Activated B cell treated with CpG ODN at 0.5 μM for 24 hours (primary cell): ENCODE measurements at regions of chr5 and their contacts with region 1.

Region 1: GRCh38 chr5:119411935-119412602 is 40.2 kb upstream of the HSD17B4 start:
- DNase-seq: no peak
- ATAC-seq: peak; percentile 74
- H3K4me3 Mint-ChIP-seq: peak overlapping the region; percentile 90
- H3K27ac Mint-ChIP-seq: peak overlapping the region; percentile 89
- H3K4me1 Mint-ChIP-seq: peaks cover 81% of the 10 kb centered on the region
- H3K27me3 Mint-ChIP-seq: no peaks in the 10 kb centered on the region
- CTCF ChIP-seq: peak; percentile 98

Region 2: DNA sequence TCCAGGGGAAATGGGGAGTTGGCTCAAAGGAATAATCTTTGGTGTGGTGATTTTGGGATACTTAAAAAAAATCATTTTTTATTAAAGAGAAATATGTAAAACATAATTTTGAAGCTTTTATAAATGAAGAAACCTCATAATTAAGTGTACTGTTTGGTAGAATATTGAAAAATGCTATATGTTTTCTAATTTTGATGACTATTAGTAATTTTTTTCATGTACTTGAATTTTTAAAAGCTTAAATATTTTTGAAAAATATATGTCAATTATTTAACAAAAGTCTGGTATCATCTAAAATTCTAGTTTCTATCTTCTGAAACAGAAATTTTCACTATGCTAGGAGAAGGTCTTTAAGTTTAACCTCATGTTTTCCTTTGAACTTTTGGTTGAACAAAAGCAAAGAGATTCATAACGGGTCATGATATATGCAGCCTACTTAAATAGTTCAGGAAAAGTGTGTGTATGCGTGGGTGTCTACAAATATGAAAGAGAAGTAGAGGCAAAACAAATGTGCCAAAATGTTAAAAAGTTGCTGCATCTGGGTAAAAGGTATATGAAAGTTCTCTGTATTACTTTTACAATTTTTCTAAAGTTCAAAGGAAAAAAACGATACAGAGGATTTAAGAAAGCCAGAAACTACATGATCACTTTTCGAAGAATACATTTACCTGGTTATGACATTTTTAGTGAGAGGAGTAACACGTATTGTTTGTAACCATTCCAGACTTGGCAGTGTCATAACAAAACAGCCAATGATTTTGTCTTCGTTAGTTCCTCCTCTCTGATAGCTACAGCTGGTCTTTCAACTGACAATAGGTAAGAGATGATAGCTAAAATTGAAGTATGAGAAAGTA is 173.6 kb before region 1 on chr5:
- CTCF ChIA-PET with region 1: interaction called, 3 read pairs
- POLR2A ChIA-PET with region 1: interaction called, 12 read pairs
- intact Hi-C with region 1: no loop called
- DNase-seq: no peak
- ATAC-seq: no peak
- H3K4me3 Mint-ChIP-seq: no peak overlapping the region
- H3K27ac Mint-ChIP-seq: no peak overlapping the region
- H3K4me1 Mint-ChIP-seq: no peaks in the 10 kb centered on the region
- H3K27me3 Mint-ChIP-seq: no peaks in the 10 kb centered on the region
- CTCF ChIP-seq: no peak

Region 3: GRCh38 chr5:119315516-119315949 is 96.5 kb before region 1 on chr5:
- CTCF ChIA-PET with region 1: interaction called, 98 read pairs
- POLR2A ChIA-PET with region 1: interaction called, 9 read pairs
- intact Hi-C with region 1: loop called (anchors 1 kb)
- DNase-seq: no peak
- ATAC-seq: peak; percentile 78
- H3K4me3 Mint-ChIP-seq: peak overlapping the region; percentile 55
- H3K27ac Mint-ChIP-seq: peak overlapping the region; percentile 82
- H3K4me1 Mint-ChIP-seq: peaks cover 92% of the 10 kb centered on the region
- H3K27me3 Mint-ChIP-seq: no peaks in the 10 kb centered on the region
- CTCF ChIP-seq: no peak

Region 4: GRCh38 chr5:119355685-119356611 is 56.1 kb before region 1 on chr5 and contains the start of gene TNFAIP8:
- CTCF ChIA-PET with region 1: interaction called, 34 read pairs
- POLR2A ChIA-PET with region 1: interaction called, 19 read pairs
- intact Hi-C with region 1: loop called (anchors 1 kb)
- DNase-seq: peak; percentile 70
- ATAC-seq: peak; percentile 66
- H3K4me3 Mint-ChIP-seq: peak within 1 kb of the TSS; percentile 100
- H3K27ac Mint-ChIP-seq: peak within 1 kb of the TSS; percentile 98
- H3K4me1 Mint-ChIP-seq: peaks cover 79% of the 10 kb centered on the region
- H3K27me3 Mint-ChIP-seq: no peaks in the 10 kb centered on the region
- CTCF ChIP-seq: no peak
- total RNA-seq, gene TNFAIP8: 135 and 149 TPM in 2 replicates

Region 5: DNA sequence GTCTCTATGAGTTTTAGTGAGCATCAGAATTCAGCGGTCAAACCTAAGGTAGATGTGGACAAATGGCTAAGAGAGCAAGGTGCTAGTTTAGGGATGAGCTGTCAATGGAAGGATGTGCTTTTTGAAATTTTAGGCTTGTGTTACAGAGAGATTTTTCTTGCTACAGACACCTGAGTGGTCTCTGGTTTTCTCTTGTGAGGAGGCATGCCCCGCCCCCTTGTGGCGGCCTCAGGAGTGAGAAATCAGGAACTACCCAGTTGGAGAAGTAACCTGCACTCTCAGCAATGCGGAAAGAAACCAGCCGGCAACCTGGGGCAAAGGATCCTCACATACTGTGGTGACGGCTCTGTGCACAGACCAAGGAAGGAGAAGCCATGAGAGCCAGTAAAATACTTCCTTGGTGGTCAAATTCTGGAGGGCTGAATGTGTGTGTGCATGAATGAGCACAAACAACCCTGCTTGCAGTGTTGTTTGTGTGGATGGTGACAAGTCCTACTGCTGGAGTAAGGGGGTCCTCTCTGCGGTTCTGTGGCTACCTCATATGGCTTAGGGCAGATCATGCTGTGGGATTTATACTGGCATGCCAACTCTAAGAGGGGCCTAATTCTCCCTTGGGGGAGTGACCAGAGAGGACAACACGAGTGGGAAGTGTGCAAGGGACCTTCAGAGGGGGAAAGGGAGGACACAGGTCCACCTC is 23.5 kb after region 1 on chr5:
- CTCF ChIA-PET with region 1: interaction called, 55 read pairs
- POLR2A ChIA-PET with region 1: interaction called, 9 read pairs
- intact Hi-C with region 1: loop called (anchors 1 kb)
- DNase-seq: peak; percentile 73
- ATAC-seq: peak; percentile 93
- H3K4me3 Mint-ChIP-seq: peak overlapping the region; percentile 29
- H3K27ac Mint-ChIP-seq: peak overlapping the region; percentile 19
- H3K4me1 Mint-ChIP-seq: peaks cover 32% of the 10 kb centered on the region
- H3K27me3 Mint-ChIP-seq: no peaks in the 10 kb centered on the region
- CTCF ChIP-seq: peak; percentile 81